ENCODE measurements at regions of chr11 and their contacts with region 1.

Region 1: GRCh38 chr11:128831174-128832120 is 35.6 kb downstream of the KCNJ1 start:
- DNase-seq: peak; percentile 84
- ATAC-seq: peak; percentile 92
- H3K4me3 ChIP-seq: no peak overlapping the region
- H3K27ac ChIP-seq: no peak overlapping the region
- H3K4me1 ChIP-seq: no peaks in the 10 kb centered on the region
- H3K27me3 ChIP-seq: peaks cover 9% of the 10 kb centered on the region
- CTCF ChIP-seq: peak; percentile 84
- POLR2A ChIP-seq: 0 out of 2 replicates have a peak, but pooled peaks have one; percentile 36
- RAD21 ChIP-seq: peak; percentile 96

Region 2: DNA sequence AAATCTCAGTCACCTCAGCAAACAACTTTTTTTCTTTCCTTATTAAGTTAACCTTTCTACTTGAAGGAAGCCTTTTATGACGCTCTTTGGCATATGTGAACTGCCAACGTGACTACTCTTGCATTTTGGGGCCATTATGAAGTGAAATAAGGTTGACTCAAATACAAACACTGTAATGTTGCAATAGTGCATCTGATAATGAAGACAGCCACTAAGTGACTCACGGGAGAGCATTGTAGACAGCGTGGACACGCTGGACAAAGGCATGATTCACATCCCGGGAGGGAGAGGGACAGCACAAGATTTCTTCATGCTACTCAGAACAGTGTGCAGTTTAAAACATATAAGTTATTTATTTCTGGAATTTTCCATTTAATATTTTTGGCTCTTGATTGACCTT is 804.9 kb before region 1 on chr11:
- CTCF ChIA-PET with region 1: no interaction called
- POLR2A ChIA-PET with region 1: no interaction called
- dilution Hi-C with region 1: no loop called
- in situ Hi-C with region 1: loop called (anchors 10 kb)
- intact Hi-C with region 1: loop called (anchors 1 kb)
- DNase-seq: peak; percentile 98
- ATAC-seq: peak; percentile 88
- H3K4me3 ChIP-seq: no peak overlapping the region
- H3K27ac ChIP-seq: no peak overlapping the region
- H3K4me1 ChIP-seq: peaks cover 9% of the 10 kb centered on the region
- H3K27me3 ChIP-seq: no peaks in the 10 kb centered on the region
- CTCF ChIP-seq: no peak
- POLR2A ChIP-seq: no peak
- RAD21 ChIP-seq: no peak

Region 3: DNA sequence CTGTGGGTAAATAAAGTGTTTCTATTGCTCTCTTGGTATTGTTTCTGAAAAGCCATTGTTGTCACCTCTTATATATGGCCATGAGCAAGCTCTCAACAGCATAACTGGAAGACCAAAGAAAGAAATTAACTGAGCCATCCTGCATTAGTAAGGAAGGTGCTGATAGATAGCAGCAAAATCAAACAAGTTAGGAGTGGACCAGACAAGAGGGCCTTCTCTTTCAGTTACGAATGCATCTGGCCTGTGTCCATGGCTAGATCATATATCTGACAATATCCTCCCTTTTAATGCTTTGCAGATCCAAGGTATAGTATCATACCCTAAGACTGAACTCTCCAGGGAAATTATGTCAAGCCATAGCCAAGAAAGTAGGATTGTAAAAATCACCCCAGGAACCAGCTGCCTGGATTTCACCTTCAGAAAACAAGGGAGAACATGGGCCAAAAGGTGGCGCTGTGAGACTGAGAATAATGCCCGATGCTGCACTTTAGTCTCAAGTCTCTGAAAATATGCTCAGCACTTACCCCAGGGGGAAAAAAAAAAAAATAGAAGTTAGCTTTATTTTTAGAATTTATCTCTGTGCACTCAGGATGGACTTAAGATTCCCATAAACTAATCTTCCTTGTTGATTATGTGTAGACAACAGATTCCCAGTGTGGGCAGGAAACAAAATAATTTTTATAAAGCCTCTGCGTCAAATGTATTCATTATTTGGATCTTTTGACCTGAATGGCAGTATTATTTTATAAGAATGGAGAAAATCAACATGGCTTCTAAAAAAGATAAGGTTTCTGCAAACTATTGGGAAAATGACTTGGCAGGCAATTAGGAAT is 659.2 kb before region 1 on chr11:
- CTCF ChIA-PET with region 1: interaction called, 13 read pairs
- POLR2A ChIA-PET with region 1: interaction called, 3 read pairs
- dilution Hi-C with region 1: loop called (anchors 25 kb)
- in situ Hi-C with region 1: loop called (anchors 5 kb)
- intact Hi-C with region 1: loop called (anchors 1 kb)
- DNase-seq: peak; percentile 86
- ATAC-seq: peak; percentile 87
- H3K4me3 ChIP-seq: no peak overlapping the region
- H3K27ac ChIP-seq: no peak overlapping the region
- H3K4me1 ChIP-seq: peaks cover 2% of the 10 kb centered on the region; the same call in 1 of the 2 replicates
- H3K27me3 ChIP-seq: peaks cover 7% of the 10 kb centered on the region
- CTCF ChIP-seq: peak; percentile 92
- POLR2A ChIP-seq: peak; percentile 37; the same call in 1 of the 2 replicates
- RAD21 ChIP-seq: peak; percentile 95

Region 4: GRCh38 chr11:128279866-128280265 is 551.6 kb before region 1 on chr11:
- CTCF ChIA-PET with region 1: no interaction called
- POLR2A ChIA-PET with region 1: no interaction called
- dilution Hi-C with region 1: no loop called
- in situ Hi-C with region 1: loop called (anchors 10 kb)
- intact Hi-C with region 1: no loop called
- DNase-seq: peak; percentile 35
- ATAC-seq: no peak
- H3K4me3 ChIP-seq: no peak overlapping the region
- H3K27ac ChIP-seq: no peak overlapping the region
- H3K4me1 ChIP-seq: no peaks in the 10 kb centered on the region
- H3K27me3 ChIP-seq: peaks cover 3% of the 10 kb centered on the region; the same call in 1 of the 2 replicates
- CTCF ChIP-seq: no peak
- POLR2A ChIP-seq: no peak
- RAD21 ChIP-seq: no peak

Region 5: DNA sequence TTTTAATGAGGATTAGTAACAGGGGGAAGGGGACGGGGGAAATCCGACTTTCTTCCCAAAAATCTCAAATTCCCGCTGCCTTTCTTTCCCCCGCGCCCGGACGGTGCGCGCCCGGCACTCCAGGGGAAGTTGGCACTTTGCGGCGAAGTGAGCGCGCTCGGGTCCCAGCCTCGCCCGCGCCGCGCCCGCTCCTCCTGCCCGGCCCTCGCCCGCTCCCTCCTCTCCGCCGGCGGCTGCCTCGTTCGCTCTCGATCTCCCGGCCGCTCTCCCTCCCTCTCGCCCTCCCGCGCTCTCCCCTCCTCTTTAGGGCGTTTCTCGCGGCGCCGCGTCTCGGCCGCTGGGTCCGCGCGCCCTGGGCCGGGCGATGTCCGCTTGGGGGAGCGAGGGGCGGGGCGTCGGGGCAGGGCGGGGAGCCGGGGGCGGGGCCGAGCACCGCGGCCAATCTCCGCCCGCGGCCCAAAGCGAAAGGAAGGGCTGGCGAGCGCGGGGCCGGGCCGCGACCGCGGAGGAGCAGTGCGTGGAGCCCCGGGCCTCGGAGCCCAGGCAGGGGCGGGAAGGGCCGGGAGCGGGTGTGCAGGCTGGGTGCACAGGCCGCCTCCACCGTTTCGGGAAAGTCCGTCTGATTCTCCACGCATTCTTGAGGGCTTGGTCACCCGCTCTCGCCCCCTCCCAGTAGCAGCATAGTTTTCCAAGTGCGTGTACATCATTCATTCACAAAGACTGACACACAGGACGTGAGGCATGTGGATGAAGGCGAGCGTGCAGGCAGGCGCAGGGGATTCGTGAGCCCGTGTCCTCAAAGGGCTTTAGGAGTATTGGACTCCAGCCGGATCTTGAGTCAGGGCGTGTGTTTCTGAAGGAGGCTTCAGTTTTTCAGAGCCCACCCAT is 309.1 kb before region 1 on chr11:
- CTCF ChIA-PET with region 1: interaction called, 3 read pairs
- POLR2A ChIA-PET with region 1: no interaction called
- dilution Hi-C with region 1: no loop called
- in situ Hi-C with region 1: no loop called
- intact Hi-C with region 1: loop called (anchors 10 kb)
- DNase-seq: peak; percentile 100
- ATAC-seq: peak; percentile 90
- H3K4me3 ChIP-seq: peak overlapping the region; percentile 99
- H3K27ac ChIP-seq: peak overlapping the region; percentile 98
- H3K4me1 ChIP-seq: peaks cover 26% of the 10 kb centered on the region
- H3K27me3 ChIP-seq: no peaks in the 10 kb centered on the region
- CTCF ChIP-seq: no peak
- POLR2A ChIP-seq: peak; percentile 96
- RAD21 ChIP-seq: peak; percentile 27

Region 6: GRCh38 chr11:128630367-128631230 is 200.8 kb before region 1 on chr11:
- CTCF ChIA-PET with region 1: interaction called, 13 read pairs
- POLR2A ChIA-PET with region 1: no interaction called
- dilution Hi-C with region 1: no loop called
- in situ Hi-C with region 1: loop called (anchors 5 kb)
- intact Hi-C with region 1: loop called (anchors 1 kb)
- DNase-seq: peak; percentile 86
- ATAC-seq: peak; percentile 96
- H3K4me3 ChIP-seq: no peak overlapping the region
- H3K27ac ChIP-seq: no peak overlapping the region
- H3K4me1 ChIP-seq: no peaks in the 10 kb centered on the region
- H3K27me3 ChIP-seq: peaks cover 4% of the 10 kb centered on the region
- CTCF ChIP-seq: peak; percentile 97
- POLR2A ChIP-seq: no peak
- RAD21 ChIP-seq: peak; percentile 97

Region 7: GRCh38 chr11:128776424-128777284 is 54.8 kb before region 1 on chr11:
- CTCF ChIA-PET with region 1: interaction called, 3 read pairs
- POLR2A ChIA-PET with region 1: no interaction called
- dilution Hi-C with region 1: no loop called
- in situ Hi-C with region 1: no loop called
- intact Hi-C with region 1: loop called (anchors 1 kb)
- DNase-seq: peak; percentile 33
- ATAC-seq: peak; percentile 94
- H3K4me3 ChIP-seq: no peak overlapping the region
- H3K27ac ChIP-seq: no peak overlapping the region; the same call in 1 of the 2 replicates
- H3K4me1 ChIP-seq: peaks cover 7% of the 10 kb centered on the region
- H3K27me3 ChIP-seq: no peaks in the 10 kb centered on the region
- CTCF ChIP-seq: peak; percentile 59
- POLR2A ChIP-seq: no peak
- RAD21 ChIP-seq: peak; percentile 50